Mammary epithelial cell (primary cell): ENCODE measurements at regions of chr21 and their contacts with region 1.

Region 1: GRCh38 chr21:32994305-32994704 is 31.4 kb upstream of the OLIG2 start:
- DNase-seq: no peak
- H3K4me3 ChIP-seq: no peak overlapping the region
- H3K27ac ChIP-seq: no peak overlapping the region
- H3K4me1 ChIP-seq: peaks cover 5% of the 10 kb centered on the region
- H3K27me3 ChIP-seq: no peaks in the 10 kb centered on the region
- CTCF ChIP-seq: peak in 1 of 2 donors; percentile 62

Region 2: DNA sequence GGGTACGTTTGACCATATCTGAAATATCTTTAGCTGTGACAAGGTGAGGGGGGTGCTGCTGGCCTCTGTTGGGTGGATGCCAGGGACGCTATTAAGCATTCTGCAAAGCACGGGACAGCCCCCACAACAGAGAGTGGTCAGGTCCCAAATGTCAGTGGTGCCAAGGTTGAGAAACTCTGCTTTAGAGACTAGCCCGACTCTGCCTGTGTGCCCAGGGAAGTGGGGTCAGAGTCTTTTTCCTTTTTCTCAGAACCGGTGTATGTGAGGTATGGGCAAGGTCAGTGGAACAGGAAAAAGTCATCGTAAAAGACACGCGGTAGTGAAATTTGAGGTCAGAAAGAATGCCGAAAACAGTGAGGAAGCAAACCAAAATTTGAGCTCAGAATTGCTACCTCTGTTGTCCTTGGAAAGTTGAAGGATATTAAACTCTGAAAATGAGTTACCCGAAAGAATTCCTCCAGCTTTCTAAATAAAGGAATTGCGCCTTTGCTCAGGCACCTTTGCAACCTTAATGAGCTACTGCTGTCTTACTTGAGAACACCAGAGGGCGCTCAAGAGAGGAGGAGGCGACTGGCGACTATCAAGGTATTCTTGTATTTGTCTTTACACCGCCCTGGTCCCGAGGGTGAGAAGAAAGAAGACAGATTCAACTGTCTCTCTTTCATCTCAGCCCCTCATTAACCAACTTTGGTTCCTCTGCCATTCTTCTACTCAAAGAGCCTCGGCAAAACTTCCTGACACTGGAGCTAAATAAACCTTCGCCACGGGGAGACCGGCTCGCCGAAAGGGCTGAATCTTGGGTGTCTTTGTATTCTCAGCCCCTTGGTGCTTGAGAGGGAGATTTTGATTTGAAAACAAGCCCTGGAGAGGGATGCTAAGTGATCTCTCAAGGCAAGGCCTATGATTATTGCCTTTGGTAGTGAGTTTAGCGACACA is 54.0 kb before region 1 on chr21:
- CTCF ChIA-PET with region 1: interaction called, 3 read pairs
- dilution Hi-C with region 1: no loop called
- in situ Hi-C with region 1: no loop called
- intact Hi-C with region 1: loop called (anchors 1 kb)
- DNase-seq: peak; percentile 26
- H3K4me3 ChIP-seq: no peak overlapping the region
- H3K27ac ChIP-seq: no peak overlapping the region
- H3K4me1 ChIP-seq: no peaks in the 10 kb centered on the region
- H3K27me3 ChIP-seq: no peaks in the 10 kb centered on the region
- CTCF ChIP-seq: peak; percentile 82 to 83

Region 3: DNA sequence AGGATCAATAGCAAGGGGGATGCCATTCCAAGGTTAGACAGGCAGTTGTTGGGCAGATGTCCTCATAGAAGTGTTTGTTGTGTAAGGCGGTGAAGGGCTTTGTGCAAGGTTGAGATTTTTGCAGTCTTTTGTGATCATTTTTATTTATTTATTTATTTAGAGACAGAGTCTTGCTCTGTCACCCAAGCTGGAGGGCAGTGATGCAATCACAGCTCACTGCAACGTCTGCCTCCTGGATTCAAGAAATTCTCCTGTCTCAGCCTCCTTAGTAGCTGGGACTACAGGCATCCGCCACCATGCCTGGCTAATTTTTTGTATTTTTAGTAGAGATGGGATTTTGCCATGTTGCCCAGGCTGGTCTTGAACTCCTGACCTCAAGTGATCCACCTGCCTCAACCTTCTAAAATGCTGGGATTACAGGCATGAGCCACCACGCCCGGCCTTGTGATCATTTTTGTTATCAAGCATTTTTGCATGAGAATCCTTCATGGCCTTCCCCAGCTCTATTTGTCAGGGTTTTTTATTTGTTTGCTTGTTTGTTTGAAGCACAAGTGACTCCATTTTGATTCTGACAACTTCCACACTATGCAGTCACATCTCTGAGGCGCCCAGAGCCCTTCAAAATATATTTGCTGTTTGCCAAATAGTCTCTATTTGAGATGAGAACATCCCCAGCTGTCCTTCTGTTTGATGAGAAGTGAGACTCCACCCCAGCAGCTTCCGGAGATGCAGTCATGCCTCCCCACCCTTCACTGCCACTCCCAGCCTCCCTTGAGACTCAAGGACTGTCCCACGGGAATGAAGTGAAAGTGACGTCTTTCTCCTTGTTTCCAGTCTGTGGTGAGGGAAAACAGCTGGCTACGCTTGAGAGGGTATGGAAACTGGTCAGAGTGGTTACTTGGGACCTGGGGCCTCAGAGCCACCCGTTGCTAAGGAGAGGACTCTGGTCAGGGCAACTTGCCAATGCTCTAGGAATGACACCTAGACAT is 447.5 kb after region 1 on chr21:
- CTCF ChIA-PET with region 1: no interaction called
- dilution Hi-C with region 1: no loop called
- in situ Hi-C with region 1: no loop called
- intact Hi-C with region 1: loop called (anchors 1 kb)
- DNase-seq: peak; percentile 96
- H3K4me3 ChIP-seq: no peak overlapping the region
- H3K27ac ChIP-seq: peak overlapping the region; percentile 70
- H3K4me1 ChIP-seq: peaks cover 19% of the 10 kb centered on the region
- H3K27me3 ChIP-seq: no peaks in the 10 kb centered on the region
- CTCF ChIP-seq: no peak